ENCODE measurements at regions of chr10 and their contacts with region 1.

Region 1: GRCh38 chr10:62183442-62183841 is 85.2 kb downstream of the RTKN2 start:
- DNase-seq: peak; percentile 53
- ATAC-seq: peak; percentile 54
- H3K4me3 Mint-ChIP-seq: peak overlapping the region; percentile 44
- H3K27ac Mint-ChIP-seq: peak overlapping the region; percentile 99
- H3K4me1 Mint-ChIP-seq: peaks cover 89% of the 10 kb centered on the region
- H3K27me3 Mint-ChIP-seq: no peaks in the 10 kb centered on the region

Region 2: GRCh38 chr10:61937631-61938351 is 245.7 kb before region 1 on chr10:
- CTCF ChIA-PET with region 1: interaction called, 6 read pairs
- POLR2A ChIA-PET with region 1: interaction called, 14 read pairs
- intact Hi-C with region 1: loop called in 1 of 2 experiments (anchors 1 kb)
- DNase-seq: no peak
- ATAC-seq: peak; percentile 62
- H3K4me3 Mint-ChIP-seq: peak overlapping the region; percentile 41
- H3K27ac Mint-ChIP-seq: peak overlapping the region; percentile 92
- H3K4me1 Mint-ChIP-seq: peaks cover 94% of the 10 kb centered on the region
- H3K27me3 Mint-ChIP-seq: no peaks in the 10 kb centered on the region

Region 3: GRCh38 chr10:62050893-62051433 is 132.5 kb before region 1 on chr10:
- CTCF ChIA-PET with region 1: interaction called, 32 read pairs
- POLR2A ChIA-PET with region 1: interaction called, 108 read pairs
- intact Hi-C with region 1: loop called (anchors 1 kb)
- DNase-seq: peak; percentile 89
- ATAC-seq: peak; percentile 48
- H3K4me3 Mint-ChIP-seq: peak overlapping the region; percentile 87
- H3K27ac Mint-ChIP-seq: peak overlapping the region; percentile 100
- H3K4me1 Mint-ChIP-seq: peaks cover 95% of the 10 kb centered on the region
- H3K27me3 Mint-ChIP-seq: no peaks in the 10 kb centered on the region

Region 4: GRCh38 chr10:62199584-62199983 is 16.1 kb after region 1 on chr10:
- CTCF ChIA-PET with region 1: interaction called, 3 read pairs
- POLR2A ChIA-PET with region 1: interaction called, 10 read pairs
- intact Hi-C with region 1: loop called in 1 of 2 experiments (anchors 1 kb)
- DNase-seq: no peak
- ATAC-seq: peak; percentile 98
- H3K4me3 Mint-ChIP-seq: no peak overlapping the region
- H3K27ac Mint-ChIP-seq: no peak overlapping the region
- H3K4me1 Mint-ChIP-seq: peaks cover 31% of the 10 kb centered on the region
- H3K27me3 Mint-ChIP-seq: no peaks in the 10 kb centered on the region

Region 5: DNA sequence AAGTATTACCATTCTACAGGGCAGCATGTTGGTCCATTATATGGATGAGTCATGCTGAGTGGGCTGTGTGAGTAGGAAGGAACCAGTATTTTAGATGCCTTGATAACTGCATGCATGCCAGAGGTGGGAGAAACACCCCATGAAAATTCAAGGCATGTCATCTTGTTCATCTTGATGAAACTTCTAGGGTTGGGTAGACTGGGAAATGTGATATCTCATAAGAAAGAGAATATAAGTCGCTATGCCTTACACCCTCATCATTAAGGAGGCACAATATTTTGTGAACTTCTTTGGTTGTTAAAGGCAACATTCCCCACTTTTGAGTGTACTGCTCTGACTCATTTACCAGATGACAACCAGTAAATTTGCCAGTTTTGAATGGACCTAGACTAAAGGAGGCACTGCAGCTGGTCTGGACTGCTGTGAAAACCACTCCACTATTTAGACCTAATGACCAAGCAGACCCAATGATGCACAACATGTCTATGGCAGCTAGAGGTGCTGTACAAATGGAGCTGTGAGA is 238.7 kb after region 1 on chr10:
- CTCF ChIA-PET with region 1: no interaction called
- POLR2A ChIA-PET with region 1: no interaction called
- intact Hi-C with region 1: loop called (anchors 1 to 2 kb)
- DNase-seq: no peak
- ATAC-seq: no peak
- H3K4me3 Mint-ChIP-seq: no peak overlapping the region
- H3K27ac Mint-ChIP-seq: no peak overlapping the region
- H3K4me1 Mint-ChIP-seq: peaks cover 23% of the 10 kb centered on the region
- H3K27me3 Mint-ChIP-seq: peaks cover 10% of the 10 kb centered on the region

Region 6: GRCh38 chr10:62992145-62992721 is 808.8 kb after region 1 on chr10:
- CTCF ChIA-PET with region 1: no interaction called
- POLR2A ChIA-PET with region 1: no interaction called
- intact Hi-C with region 1: loop called in 1 of 2 experiments (anchors 2 kb)
- DNase-seq: peak; percentile 28
- ATAC-seq: peak; percentile 19
- H3K4me3 Mint-ChIP-seq: peak overlapping the region; percentile 26
- H3K27ac Mint-ChIP-seq: peak overlapping the region; percentile 82
- H3K4me1 Mint-ChIP-seq: peaks cover 63% of the 10 kb centered on the region
- H3K27me3 Mint-ChIP-seq: peaks cover 3% of the 10 kb centered on the region